Mammary epithelial cell (primary cell): ENCODE measurements at regions of chr11 and their contacts with region 1.

Region 1: DNA sequence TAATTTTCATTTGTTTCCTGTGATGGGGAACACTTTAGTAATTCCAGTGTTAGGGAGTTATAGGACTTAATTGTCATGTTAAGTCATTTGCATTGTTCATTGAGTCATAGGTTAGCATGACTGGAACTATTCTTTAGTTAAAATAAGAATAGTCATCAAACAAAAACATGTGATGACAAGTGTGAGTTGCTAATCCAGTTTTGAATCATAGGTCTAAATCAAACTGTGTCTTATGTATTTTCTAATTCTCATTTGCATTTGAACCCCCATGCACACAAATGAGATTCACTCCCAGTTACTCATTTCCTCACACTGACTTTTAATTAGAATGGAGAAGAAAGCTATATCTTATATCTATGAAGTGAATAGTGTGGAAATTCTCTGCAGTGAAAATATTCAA is 405.6 kb downstream of the LRRC4C start:
- DNase-seq: peak; percentile 90
- H3K4me3 ChIP-seq: peak overlapping the region; percentile 23 to 52 (median 41)
- H3K27ac ChIP-seq: peak overlapping the region; percentile 100
- H3K4me1 ChIP-seq: peaks cover 40% of the 10 kb centered on the region
- H3K27me3 ChIP-seq: no peaks in the 10 kb centered on the region
- CTCF ChIP-seq: no peak

Region 2: DNA sequence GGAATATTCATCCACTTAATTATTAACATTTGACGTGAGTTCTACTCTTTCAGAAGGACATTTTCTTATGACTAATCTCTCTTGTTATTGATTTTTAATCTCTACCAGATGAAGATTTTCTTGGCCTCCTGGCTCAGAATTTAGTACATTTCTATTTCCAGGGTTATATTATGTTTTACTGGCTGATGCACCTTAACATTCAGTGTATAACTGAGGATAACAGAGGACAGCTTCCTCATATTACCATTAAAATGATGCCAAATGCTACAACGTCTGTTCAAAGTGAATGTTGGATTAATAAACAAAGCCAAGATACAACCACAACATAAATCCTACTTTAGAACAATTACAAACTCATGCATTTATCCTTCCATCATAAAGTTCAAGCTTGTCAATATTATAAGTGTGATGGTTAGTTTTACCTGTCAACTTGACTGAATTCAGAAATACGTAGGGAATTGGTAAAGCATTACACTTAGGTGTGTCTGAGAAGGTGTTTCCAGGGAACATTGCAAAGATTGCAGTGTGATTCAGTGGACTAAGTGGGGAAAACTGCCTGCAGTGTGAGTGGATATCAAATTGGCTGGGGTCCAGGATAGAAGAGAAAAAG is 79.6 kb before region 1 on chr11:
- CTCF ChIA-PET with region 1: no interaction called
- dilution Hi-C with region 1: no loop called
- in situ Hi-C with region 1: no loop called
- intact Hi-C with region 1: no loop called
- DNase-seq: no peak
- H3K4me3 ChIP-seq: no peak overlapping the region
- H3K27ac ChIP-seq: no peak overlapping the region
- H3K4me1 ChIP-seq: no peaks in the 10 kb centered on the region
- H3K27me3 ChIP-seq: no peaks in the 10 kb centered on the region
- CTCF ChIP-seq: no peak

Region 3: GRCh38 chr11:40987776-40988435 is 66.0 kb before region 1 on chr11:
- CTCF ChIA-PET with region 1: no interaction called
- dilution Hi-C with region 1: no loop called
- in situ Hi-C with region 1: no loop called
- intact Hi-C with region 1: no loop called
- DNase-seq: peak; percentile 20
- H3K4me3 ChIP-seq: no peak overlapping the region
- H3K27ac ChIP-seq: no peak overlapping the region
- H3K4me1 ChIP-seq: no peaks in the 10 kb centered on the region
- H3K27me3 ChIP-seq: no peaks in the 10 kb centered on the region
- CTCF ChIP-seq: no peak

Region 4: DNA sequence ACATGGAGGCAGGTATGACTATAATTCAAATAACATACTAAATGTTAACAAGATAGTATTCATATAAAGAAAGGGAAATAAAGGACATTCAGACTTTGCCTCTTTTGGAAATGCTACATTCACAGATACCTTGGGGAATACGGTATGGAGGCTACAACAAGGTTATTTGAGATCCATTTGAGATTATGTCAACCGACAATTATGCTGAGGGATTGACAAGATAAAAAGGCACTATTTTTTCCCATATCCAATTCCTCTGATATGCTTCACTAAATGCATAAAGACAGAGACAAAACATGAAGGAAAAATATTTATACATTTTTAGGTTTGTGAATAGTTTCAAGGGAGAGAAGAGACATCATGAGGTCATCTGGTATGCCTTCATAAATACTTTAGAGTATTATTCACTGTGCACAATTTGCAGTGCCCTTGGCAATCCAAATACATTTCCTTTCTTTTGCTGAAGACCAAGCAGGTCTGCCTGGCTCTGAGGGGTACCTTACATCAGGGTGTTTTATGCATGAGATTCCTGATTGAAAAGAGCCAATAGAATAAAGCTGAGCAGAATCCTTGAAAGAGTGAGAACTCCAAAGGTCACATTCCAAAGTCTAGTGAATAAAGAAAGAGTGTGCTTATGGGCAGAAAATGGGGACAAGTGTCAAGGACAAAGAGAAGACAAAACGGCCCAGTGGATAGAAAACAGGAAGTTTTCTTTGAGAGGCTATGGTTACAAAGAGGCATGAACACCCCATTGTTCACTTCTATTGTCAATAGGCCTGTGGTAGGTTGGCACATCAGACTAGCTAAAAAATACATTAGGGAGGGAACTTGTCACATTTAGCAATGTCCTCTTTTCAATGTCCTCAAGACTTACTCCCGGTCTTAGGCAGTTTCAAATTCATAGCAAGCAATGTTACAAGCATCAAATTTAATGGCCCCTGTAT is 50.3 kb before region 1 on chr11:
- CTCF ChIA-PET with region 1: no interaction called
- dilution Hi-C with region 1: no loop called
- in situ Hi-C with region 1: no loop called
- intact Hi-C with region 1: loop called (anchors 5 kb)
- DNase-seq: peak; percentile 35
- H3K4me3 ChIP-seq: no peak overlapping the region
- H3K27ac ChIP-seq: peak overlapping the region; percentile 0
- H3K4me1 ChIP-seq: peaks cover 14% of the 10 kb centered on the region
- H3K27me3 ChIP-seq: no peaks in the 10 kb centered on the region
- CTCF ChIP-seq: no peak

Region 5: DNA sequence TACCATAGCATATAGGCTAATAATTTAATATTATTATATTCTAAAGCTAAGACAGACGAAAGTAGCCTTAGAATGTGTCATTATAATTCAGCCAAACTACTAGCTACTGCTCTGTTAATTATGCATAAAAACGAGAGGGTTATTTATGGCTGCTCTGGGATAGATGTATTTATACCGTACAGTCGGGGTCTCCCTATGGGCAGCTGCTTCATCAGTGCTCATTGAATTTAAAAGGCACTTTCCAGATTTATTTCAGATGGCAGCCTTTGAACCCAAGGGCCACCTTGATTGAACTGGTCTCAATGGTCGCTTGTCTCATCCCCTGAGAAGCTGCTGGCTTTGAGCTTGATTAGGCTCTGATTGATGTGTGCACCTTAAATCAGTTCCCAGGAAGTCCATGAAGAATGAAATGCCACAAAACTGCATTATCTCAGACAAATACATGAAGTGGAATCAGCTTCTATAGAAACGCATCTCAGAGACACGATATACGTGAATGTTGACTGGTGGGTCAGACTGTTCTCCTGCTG is 27.9 kb after region 1 on chr11:
- CTCF ChIA-PET with region 1: no interaction called
- dilution Hi-C with region 1: no loop called
- in situ Hi-C with region 1: no loop called
- intact Hi-C with region 1: no loop called
- DNase-seq: no peak
- H3K4me3 ChIP-seq: no peak overlapping the region
- H3K27ac ChIP-seq: no peak overlapping the region
- H3K4me1 ChIP-seq: no peaks in the 10 kb centered on the region
- H3K27me3 ChIP-seq: peaks cover 3% of the 10 kb centered on the region
- CTCF ChIP-seq: no peak

Region 6: DNA sequence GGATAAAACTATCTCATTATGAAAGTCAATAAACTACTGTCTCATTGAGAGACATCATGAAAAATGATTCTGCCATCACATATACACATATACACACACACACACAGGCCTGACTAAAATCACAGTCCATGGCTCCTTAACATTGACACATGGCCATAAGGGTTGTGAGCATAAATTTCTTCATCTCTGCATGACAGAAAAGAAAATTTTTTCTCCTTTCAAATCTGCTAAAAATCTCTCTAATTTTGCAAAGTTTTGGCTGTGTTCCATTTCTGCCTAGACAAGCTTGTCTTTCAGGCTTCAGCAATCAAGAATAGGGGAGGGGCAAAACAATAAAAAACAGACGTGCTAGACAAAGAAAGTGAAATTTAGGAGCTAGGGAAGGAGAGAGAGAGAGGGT is 81.1 kb after region 1 on chr11:
- CTCF ChIA-PET with region 1: no interaction called
- dilution Hi-C with region 1: no loop called
- in situ Hi-C with region 1: no loop called
- intact Hi-C with region 1: no loop called
- DNase-seq: no peak
- H3K4me3 ChIP-seq: no peak overlapping the region
- H3K27ac ChIP-seq: no peak overlapping the region
- H3K4me1 ChIP-seq: no peaks in the 10 kb centered on the region
- H3K27me3 ChIP-seq: no peaks in the 10 kb centered on the region
- CTCF ChIP-seq: no peak